ENCODE measurements at regions of chr15 and their contacts with region 1.

Region 1: GRCh38 chr15:32683906-32684584 is 33.8 kb upstream of the GREM1 start:
- DNase-seq: peak; percentile 89
- H3K4me3 ChIP-seq: no peak overlapping the region
- H3K27ac ChIP-seq: peak overlapping the region; percentile 28
- H3K4me1 ChIP-seq: peaks cover 64% of the 10 kb centered on the region
- H3K27me3 ChIP-seq: no peaks in the 10 kb centered on the region
- CTCF ChIP-seq: no peak

Region 2: GRCh38 chr15:32717426-32718226 is 33.6 kb after region 1 on chr15 and contains the start of gene GREM1:
- CTCF ChIA-PET with region 1: no interaction called
- dilution Hi-C with region 1: no loop called
- in situ Hi-C with region 1: no loop called
- intact Hi-C with region 1: no loop called
- DNase-seq: no peak
- H3K4me3 ChIP-seq: peak within 1 kb of the TSS; percentile 15 to 41 (median 29)
- H3K27ac ChIP-seq: no peak within 1 kb of the TSS
- H3K4me1 ChIP-seq: peaks cover 17% of the 10 kb centered on the region
- H3K27me3 ChIP-seq: peaks cover 38% of the 10 kb centered on the region
- CTCF ChIP-seq: no peak
- total RNA-seq, gene GREM1: 1.8 TPM in 1 of 2 donors, not detected in the other

Region 3: DNA sequence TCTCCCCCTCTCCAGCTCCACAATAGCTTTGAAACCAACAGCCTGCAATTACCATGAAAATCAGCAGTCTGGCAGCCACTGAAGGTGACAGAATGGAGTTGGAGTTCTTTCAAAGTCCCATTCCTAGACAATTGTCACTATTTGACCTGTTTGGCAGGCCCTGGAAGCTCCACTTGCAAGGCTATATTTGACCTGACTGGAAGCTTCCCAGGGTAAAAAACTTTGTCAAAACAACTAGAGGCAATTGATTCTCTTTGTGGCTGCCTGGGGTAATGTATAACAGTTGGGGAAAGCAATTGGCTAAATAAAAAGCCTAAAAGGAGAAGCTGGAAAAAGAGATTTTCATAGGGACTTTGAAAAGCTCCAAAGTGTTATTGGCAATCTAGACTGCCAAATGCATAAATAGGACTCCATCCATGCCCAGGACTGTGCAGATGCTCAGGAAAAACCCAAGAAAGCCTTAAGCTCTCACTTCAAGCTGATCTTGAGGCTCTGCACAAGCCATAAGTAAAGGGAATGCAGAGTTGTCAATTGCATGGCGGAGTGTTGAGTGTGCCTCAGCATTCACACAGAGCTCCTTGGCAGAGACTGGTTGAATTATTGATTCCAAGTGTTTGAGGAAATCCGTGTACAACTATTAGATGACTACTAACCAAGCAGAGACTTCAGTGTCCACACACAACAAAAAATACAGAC is 52.1 kb after region 1 on chr15:
- CTCF ChIA-PET with region 1: no interaction called
- dilution Hi-C with region 1: loop called (anchors 5 kb)
- in situ Hi-C with region 1: no loop called
- intact Hi-C with region 1: no loop called
- DNase-seq: no peak
- H3K4me3 ChIP-seq: no peak overlapping the region
- H3K27ac ChIP-seq: no peak overlapping the region
- H3K4me1 ChIP-seq: no peaks in the 10 kb centered on the region
- H3K27me3 ChIP-seq: no peaks in the 10 kb centered on the region
- CTCF ChIP-seq: no peak

Region 4: GRCh38 chr15:32763295-32763694 is 79.2 kb after region 1 on chr15:
- CTCF ChIA-PET with region 1: no interaction called
- dilution Hi-C with region 1: no loop called
- in situ Hi-C with region 1: no loop called
- intact Hi-C with region 1: no loop called
- DNase-seq: no peak
- H3K4me3 ChIP-seq: no peak overlapping the region
- H3K27ac ChIP-seq: no peak overlapping the region
- H3K4me1 ChIP-seq: no peaks in the 10 kb centered on the region
- H3K27me3 ChIP-seq: no peaks in the 10 kb centered on the region
- CTCF ChIP-seq: no peak

Region 5: DNA sequence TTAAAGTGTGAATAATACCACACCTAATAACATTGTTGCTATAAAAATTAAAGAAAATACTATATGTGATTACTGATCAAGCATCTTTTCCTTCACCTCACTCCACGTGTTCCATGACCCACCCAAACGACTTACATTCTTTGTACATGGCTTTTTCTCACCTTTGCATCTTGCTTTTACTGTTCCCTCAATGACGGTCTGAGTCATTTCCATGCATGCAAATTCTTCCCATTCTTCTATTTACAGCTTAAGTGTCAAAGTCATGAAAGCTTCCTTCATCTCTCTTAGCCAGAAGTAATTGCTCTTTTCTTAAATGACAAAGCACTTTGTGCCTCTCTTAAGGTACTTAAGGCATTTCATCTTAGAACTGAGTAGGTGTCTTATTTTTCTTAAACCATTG is 97.7 kb after region 1 on chr15:
- CTCF ChIA-PET with region 1: no interaction called
- dilution Hi-C with region 1: loop called (anchors 5 kb)
- in situ Hi-C with region 1: no loop called
- intact Hi-C with region 1: no loop called
- DNase-seq: no peak
- H3K4me3 ChIP-seq: no peak overlapping the region
- H3K27ac ChIP-seq: no peak overlapping the region
- H3K4me1 ChIP-seq: no peaks in the 10 kb centered on the region
- H3K27me3 ChIP-seq: no peaks in the 10 kb centered on the region
- CTCF ChIP-seq: no peak

Region 6: DNA sequence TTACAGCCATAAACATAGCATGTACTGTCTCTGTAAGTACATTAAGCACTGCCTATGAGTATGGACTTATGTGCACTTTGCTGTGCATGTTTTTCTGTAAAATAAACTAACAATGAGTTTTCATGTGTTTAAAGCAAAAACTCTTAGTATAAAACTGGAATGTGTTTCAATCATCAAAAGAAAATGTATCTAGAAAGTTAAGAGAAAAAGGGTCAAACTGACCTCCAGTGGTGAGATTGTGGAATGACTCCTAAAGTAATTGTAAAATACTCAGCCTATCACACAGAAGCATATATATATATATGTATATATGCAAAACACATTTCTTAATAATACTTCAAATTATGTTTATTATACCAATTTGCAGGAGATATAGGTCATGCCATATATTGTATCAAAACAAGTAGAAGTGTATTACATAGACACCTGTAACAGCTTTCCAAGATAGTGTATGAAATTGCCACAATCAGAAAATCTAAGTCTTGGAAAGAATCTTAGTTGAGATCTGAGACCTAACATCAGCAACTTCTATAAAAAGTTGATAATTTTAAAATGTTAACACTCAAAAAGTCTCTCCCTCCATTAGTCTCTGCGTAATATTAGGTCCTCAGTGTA is 310.9 kb after region 1 on chr15:
- CTCF ChIA-PET with region 1: no interaction called
- dilution Hi-C with region 1: loop called (anchors 25 kb)
- in situ Hi-C with region 1: no loop called
- intact Hi-C with region 1: no loop called
- DNase-seq: no peak
- H3K4me3 ChIP-seq: no peak overlapping the region
- H3K27ac ChIP-seq: no peak overlapping the region
- H3K4me1 ChIP-seq: no peaks in the 10 kb centered on the region
- H3K27me3 ChIP-seq: no peaks in the 10 kb centered on the region
- CTCF ChIP-seq: peak; percentile 56 to 67

Measured in mammary epithelial cell (primary cell).